WTC11 (cell line): ENCODE measurements at regions of chr19 and their contacts with region 1.

Region 1: DNA sequence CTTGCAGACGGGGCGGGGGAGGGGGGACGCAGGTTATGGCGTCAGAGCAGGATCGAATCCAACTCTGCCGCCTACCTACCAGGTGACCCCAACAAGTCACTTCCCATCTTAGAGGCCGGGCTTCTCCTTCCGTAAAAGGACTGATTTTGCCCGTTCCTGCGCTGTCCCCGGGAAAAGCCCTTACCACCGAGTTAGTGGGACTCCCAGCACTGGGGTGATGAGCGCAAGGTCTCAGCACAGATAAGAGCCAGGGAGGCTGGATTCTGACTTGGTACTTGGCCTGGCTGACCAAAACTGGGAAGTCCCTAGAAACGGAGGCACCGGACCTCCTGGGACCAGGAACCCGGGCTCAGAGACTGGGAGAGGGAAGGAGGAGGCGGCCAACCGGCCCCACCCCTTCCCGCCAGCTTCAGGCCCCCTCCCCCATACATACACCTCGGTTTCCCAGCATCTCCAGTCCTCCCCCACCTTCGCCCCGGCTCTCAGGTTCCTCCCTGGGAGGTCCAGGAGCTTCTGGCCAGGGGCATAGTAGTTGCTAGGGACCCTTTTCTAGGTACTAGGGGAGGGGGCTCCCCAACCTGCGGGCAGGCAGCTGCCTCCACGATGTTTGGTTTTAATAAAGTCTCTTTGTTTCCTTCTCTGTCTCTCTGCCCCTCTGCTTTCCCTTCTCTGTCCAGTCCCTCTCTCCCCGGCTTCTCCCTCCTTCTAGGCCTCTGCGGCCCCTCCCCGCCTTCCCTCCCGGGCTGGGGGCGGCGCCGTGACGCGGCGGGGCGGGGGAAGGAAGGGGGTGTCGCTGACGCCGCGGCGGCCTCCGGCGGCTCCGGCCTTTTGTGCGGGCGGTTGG is at the start of gene GRAMD1A:
- DNase-seq: peak; percentile 82
- ATAC-seq: peak; percentile 46
- H3K4me3 Mint-ChIP-seq: peak within 1 kb of the TSS; percentile 100
- H3K27ac Mint-ChIP-seq: peak within 1 kb of the TSS; percentile 98
- H3K4me1 Mint-ChIP-seq: peaks cover 64% of the 10 kb centered on the region
- H3K27me3 Mint-ChIP-seq: no peaks in the 10 kb centered on the region
- CTCF ChIP-seq: no peak
- total RNA-seq, gene GRAMD1A: 235 to 389 TPM (median 236 TPM) in 3 replicates

Region 2: GRCh38 chr19:35013031-35013819 is 13.5 kb after region 1 on chr19:
- CTCF ChIA-PET with region 1: interaction called, 10 read pairs
- POLR2A ChIA-PET with region 1: interaction called, 4 read pairs
- DNase-seq: peak; percentile 89
- ATAC-seq: peak; percentile 81
- H3K4me3 Mint-ChIP-seq: no peak overlapping the region
- H3K27ac Mint-ChIP-seq: peak overlapping the region; percentile 87; the same call in 1 of the 2 replicates
- H3K4me1 Mint-ChIP-seq: peaks cover 11% of the 10 kb centered on the region; the same call in 1 of the 2 replicates
- H3K27me3 Mint-ChIP-seq: no peaks in the 10 kb centered on the region
- CTCF ChIP-seq: peak; percentile 98